Right ventricle myocardium superior (tissue), 1 donor: ENCODE measurements at regions of chr5 and their contacts with region 1.

Region 1: GRCh38 chr5:57173185-57174127 is at the start of gene GPBP1:
- DNase-seq: peak; percentile 99
- ATAC-seq: peak; percentile 94
- total RNA-seq, gene GPBP1: 54.0 TPM

Region 2: DNA sequence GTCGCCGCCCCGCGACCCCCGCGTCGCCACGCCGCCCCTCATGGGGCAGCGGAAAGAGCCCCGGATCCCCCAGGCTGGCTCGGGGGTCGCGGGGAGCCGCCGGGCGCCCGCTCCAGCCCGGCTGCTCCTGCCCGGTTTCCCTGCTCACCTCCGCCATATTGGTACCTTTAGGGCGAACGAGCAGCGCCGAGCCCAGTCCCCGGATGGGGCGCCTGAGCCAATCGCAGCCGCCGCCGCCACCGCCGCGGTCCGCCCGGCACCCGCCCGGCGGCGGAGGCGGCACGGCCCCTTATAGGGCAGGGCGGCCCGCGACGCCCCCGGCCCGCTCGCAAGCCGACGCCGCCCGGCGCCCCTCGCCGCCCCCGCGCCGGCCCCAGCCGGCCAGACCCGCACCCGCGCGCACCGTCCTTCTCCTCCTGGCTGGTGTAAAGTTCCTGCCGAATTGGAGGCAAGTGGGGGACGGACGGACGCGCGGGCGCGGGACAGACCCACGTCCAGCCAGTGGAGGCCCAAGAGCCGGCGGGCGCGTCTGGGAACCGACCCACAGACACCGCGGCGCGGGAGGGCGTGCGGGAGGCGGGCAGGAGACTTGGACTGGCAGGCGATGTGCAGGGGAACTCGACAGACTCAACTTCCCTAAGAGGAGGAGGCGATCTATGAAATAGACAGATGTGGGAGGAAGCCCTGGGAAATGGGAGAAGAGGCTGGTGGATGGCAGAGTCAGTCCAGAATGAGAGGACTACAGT is 221.3 kb before region 1 on chr5 and contains the start of gene MIER3:
- intact Hi-C with region 1: loop called (anchors 10 kb)
- DNase-seq: peak; percentile 87
- ATAC-seq: peak; percentile 96
- total RNA-seq, gene MIER3: 14.7 TPM

Region 3: DNA sequence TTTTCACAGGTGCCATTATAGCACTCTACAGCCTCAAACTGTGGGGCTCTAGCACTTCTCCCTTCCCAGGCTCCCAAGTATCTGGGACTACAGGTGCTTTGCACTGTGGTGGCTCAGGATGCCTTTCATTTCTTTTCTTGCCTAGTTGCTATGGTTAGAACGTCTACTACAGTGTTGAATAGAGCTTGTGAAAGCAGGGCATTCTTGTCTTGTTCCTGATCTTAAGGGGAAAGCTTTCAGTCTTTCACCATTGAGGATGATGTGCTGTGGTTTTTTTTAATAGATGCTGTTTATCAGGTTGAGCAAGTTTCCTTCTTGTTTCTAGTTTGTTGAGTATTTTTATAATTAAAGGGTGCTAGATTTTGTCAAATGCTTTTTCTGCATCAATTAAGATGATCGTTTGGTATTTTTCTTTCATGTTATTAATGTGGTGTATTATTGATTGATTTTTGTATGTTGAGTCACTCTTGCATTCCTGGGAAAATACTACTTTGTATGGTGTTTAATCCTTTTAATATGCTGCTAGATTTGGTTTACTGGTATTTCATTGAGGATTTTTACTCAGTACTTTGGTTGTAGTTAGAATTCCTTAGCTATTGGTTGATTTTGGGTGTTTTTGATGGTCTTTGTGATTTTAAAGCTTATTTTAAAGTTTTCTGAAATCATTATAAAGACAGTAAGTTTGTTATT is 36.0 kb after region 1 on chr5:
- intact Hi-C with region 1: loop called (anchors 5 kb)
- DNase-seq: no peak
- ATAC-seq: no peak